ENCODE measurements at regions of chr1 and their contacts with region 1.

Region 1: DNA sequence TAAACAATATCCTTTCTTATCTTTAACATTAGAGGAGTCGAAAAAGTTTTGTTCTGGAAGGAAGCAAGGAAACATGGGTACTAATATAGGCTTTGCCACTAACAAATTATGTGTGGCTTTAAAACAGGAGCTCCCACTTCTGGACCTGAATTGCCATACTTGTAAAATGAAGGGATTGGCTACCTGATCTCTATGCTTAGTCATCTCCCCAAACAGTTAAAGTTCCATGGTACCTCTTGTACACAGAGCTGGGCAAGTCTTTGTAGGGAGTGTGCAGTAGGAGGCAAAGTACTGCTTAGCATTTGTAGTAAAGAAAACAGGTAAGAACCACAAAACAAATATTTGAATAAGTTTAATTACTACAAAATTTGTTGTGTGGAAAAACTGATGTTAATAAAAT is 81.3 kb downstream of the MAST2 start:
- DNase-seq: no peak
- H3K4me3 ChIP-seq: no peak overlapping the region
- H3K27ac ChIP-seq: no peak overlapping the region
- H3K4me1 ChIP-seq: no peaks in the 10 kb centered on the region
- H3K27me3 ChIP-seq: no peaks in the 10 kb centered on the region
- CTCF ChIP-seq: no peak
- POLR2A ChIP-seq: no peak

Region 2: GRCh38 chr1:45647248-45648021 is 237.3 kb before region 1 on chr1:
- CTCF ChIA-PET with region 1: interaction called, 4 read pairs
- POLR2A ChIA-PET with region 1: no interaction called
- dilution Hi-C with region 1: no loop called
- intact Hi-C with region 1: loop called (anchors 5 kb)
- DNase-seq: peak; percentile 41
- H3K4me3 ChIP-seq: no peak overlapping the region
- H3K27ac ChIP-seq: no peak overlapping the region
- H3K4me1 ChIP-seq: peaks cover 9% of the 10 kb centered on the region
- H3K27me3 ChIP-seq: no peaks in the 10 kb centered on the region
- CTCF ChIP-seq: no peak
- POLR2A ChIP-seq: no peak

Region 3: DNA sequence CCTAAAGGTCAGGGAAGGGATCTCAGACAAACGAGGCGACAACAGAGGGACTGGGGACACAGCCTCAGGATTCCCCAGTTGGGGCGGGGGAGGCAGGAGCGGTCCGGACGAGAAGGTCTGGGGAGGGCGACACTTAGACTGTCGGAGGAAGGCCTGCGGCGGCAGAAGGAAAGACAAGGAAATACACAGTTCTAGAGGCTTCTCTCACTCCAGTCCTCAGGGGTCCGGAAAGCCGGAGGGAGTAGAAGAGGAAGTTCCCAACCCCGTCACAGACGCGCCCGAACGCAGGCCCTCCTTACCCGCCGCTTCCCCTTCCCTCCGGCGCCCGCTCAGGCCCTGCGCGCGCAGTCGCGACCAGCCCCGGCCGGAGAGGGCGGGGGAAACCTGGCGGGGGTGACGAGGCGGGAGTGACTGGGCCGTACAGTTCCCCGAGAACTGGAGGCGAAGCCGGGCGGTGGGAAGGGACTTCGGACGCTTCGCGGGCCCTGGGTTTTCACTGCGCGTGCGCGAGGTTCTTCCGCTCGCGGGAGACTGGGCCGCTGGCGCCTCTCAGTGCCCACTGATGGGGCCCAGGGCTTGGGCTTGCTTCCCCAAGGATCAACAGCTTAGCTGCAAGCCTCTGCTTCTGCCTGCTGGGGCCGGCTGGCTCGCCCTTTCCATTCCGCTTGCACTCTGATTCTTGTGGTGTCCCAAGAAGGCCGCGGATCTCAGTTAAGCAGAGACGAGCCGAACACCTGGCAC is 134.2 kb before region 1 on chr1 and contains the start of gene IPP:
- CTCF ChIA-PET with region 1: no interaction called
- POLR2A ChIA-PET with region 1: no interaction called
- dilution Hi-C with region 1: no loop called
- intact Hi-C with region 1: loop called (anchors 5 kb)
- DNase-seq: peak; percentile 99
- H3K4me3 ChIP-seq: peak within 1 kb of the TSS; percentile 65 to 83 (median 81)
- H3K27ac ChIP-seq: peak within 1 kb of the TSS; percentile 97
- H3K4me1 ChIP-seq: peaks cover 8% of the 10 kb centered on the region
- H3K27me3 ChIP-seq: no peaks in the 10 kb centered on the region
- CTCF ChIP-seq: peak in 1 of 2 donors; percentile 11
- POLR2A ChIP-seq: peak; percentile 98
- total RNA-seq, gene IPP: 6.3 and 7.2 TPM in 2 replicates

Measured in endothelial cell of umbilical vein (primary cell).